Activated CD8-positive, alpha-beta T cell treated with anti-CD3 and anti-CD28 coated beads, Interleukin-2, amount 10 ng/mL, durations not matched to agents 7 days and 5 days (primary cell): ENCODE measurements at regions of chr2 and their contacts with region 1.

Region 1: DNA sequence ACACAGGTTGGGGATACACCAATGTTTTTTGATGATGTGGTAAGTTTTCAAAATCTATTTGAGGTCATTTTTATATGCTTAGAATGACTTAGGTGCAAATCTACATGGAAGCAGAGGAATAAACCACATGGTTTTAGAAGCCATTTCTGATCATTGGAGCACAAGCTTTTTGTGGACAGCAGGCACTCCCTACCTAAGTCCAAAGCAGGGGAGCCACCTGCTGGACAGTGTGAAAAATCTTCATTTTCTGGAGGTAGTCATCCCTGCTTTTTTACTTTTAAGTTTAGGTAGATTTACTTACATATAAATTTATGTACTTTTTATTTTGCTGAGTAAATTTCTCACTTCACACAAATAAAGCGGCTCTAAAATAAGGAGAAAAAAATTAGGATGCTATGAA is 323.2 kb downstream of the PLCL1 start:
- DNase-seq: peak; percentile 48
- ATAC-seq: no peak
- H3K4me3 Mint-ChIP-seq: no peak overlapping the region
- H3K27ac Mint-ChIP-seq: no peak overlapping the region
- H3K4me1 Mint-ChIP-seq: no peaks in the 10 kb centered on the region
- H3K27me3 Mint-ChIP-seq: no peaks in the 10 kb centered on the region

Region 2: GRCh38 chr2:197804049-197804757 is 323.4 kb before region 1 on chr2 and contains the start of gene PLCL1:
- CTCF ChIA-PET with region 1: interaction called, 11 read pairs
- POLR2A ChIA-PET with region 1: no interaction called
- DNase-seq: peak; percentile 91
- ATAC-seq: peak; percentile 100
- H3K4me3 Mint-ChIP-seq: peak within 1 kb of the TSS; percentile 84
- H3K27ac Mint-ChIP-seq: peak within 1 kb of the TSS; percentile 51
- H3K4me1 Mint-ChIP-seq: peaks cover 20% of the 10 kb centered on the region
- H3K27me3 Mint-ChIP-seq: peaks cover 36% of the 10 kb centered on the region
- total RNA-seq, gene PLCL1: 0.08 to 0.18 TPM

Region 3: GRCh38 chr2:197851451-197851850 is 276.2 kb before region 1 on chr2:
- CTCF ChIA-PET with region 1: interaction called, 12 read pairs
- POLR2A ChIA-PET with region 1: no interaction called
- DNase-seq: no peak
- ATAC-seq: no peak
- H3K4me3 Mint-ChIP-seq: no peak overlapping the region
- H3K27ac Mint-ChIP-seq: no peak overlapping the region
- H3K4me1 Mint-ChIP-seq: peaks cover 12% of the 10 kb centered on the region
- H3K27me3 Mint-ChIP-seq: peaks cover 3% of the 10 kb centered on the region

Region 4: DNA sequence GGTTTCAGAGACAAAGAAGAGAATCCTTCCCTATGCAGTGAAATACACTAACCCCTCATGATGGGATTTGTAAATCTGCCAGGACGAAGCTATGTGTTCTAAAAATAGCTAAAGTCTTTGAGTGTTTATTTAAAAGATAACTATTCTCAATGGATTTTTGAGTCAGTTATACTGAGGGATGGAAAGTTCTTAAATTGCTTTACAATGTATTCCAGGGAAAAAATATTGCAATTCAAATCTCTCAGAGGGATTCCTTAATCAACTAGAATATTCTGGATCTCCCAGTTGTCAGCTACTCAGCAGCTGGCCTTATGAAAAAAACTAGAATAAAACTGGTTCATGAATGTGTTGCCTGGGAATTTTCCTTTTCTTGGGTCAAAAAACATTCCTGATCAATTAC is 10.9 kb before region 1 on chr2:
- CTCF ChIA-PET with region 1: interaction called, 12 read pairs
- POLR2A ChIA-PET with region 1: no interaction called
- DNase-seq: no peak
- ATAC-seq: no peak
- H3K4me3 Mint-ChIP-seq: no peak overlapping the region
- H3K27ac Mint-ChIP-seq: no peak overlapping the region
- H3K4me1 Mint-ChIP-seq: no peaks in the 10 kb centered on the region
- H3K27me3 Mint-ChIP-seq: no peaks in the 10 kb centered on the region